CD8-positive, alpha-beta T cell (primary cell): ENCODE measurements at regions of chr2 and their contacts with region 1.

Region 1: GRCh38 chr2:69717861-69718273 is 24.1 kb upstream of the ANXA4 start:
- DNase-seq: no peak
- ATAC-seq: no peak
- H3K4me3 ChIP-seq: no peak overlapping the region
- H3K4me3 Mint-ChIP-seq: no peak overlapping the region
- H3K27ac ChIP-seq: no peak overlapping the region
- H3K27ac Mint-ChIP-seq: no peak overlapping the region
- H3K4me1 ChIP-seq: peaks cover 11% of the 10 kb centered on the region
- H3K4me1 Mint-ChIP-seq: peaks cover 18% of the 10 kb centered on the region
- H3K27me3 ChIP-seq: no peaks in the 10 kb centered on the region
- H3K27me3 Mint-ChIP-seq: no peaks in the 10 kb centered on the region
- CTCF ChIP-seq: no peak

Region 2: GRCh38 chr2:69483696-69484095 is 234.2 kb before region 1 on chr2:
- CTCF ChIA-PET with region 1: no interaction called
- POLR2A ChIA-PET with region 1: no interaction called
- intact Hi-C with region 1: no loop called
- DNase-seq: no peak
- ATAC-seq: no peak
- H3K4me3 ChIP-seq: no peak overlapping the region
- H3K4me3 Mint-ChIP-seq: no peak overlapping the region
- H3K27ac ChIP-seq: no peak overlapping the region
- H3K27ac Mint-ChIP-seq: peak overlapping the region; percentile 66
- H3K4me1 ChIP-seq: no peaks in the 10 kb centered on the region
- H3K4me1 Mint-ChIP-seq: peaks cover 11% of the 10 kb centered on the region
- H3K27me3 ChIP-seq: no peaks in the 10 kb centered on the region
- H3K27me3 Mint-ChIP-seq: no peaks in the 10 kb centered on the region
- CTCF ChIP-seq: no peak

Region 3: GRCh38 chr2:69559442-69560146 is 158.3 kb before region 1 on chr2:
- CTCF ChIA-PET with region 1: interaction called, 72 read pairs
- POLR2A ChIA-PET with region 1: no interaction called
- intact Hi-C with region 1: loop called (anchors 1 kb)
- DNase-seq: peak in 2 of 9 experiments; percentile 51 to 63
- ATAC-seq: peak; percentile 70
- H3K4me3 ChIP-seq: no peak overlapping the region
- H3K4me3 Mint-ChIP-seq: no peak overlapping the region
- H3K27ac ChIP-seq: no peak overlapping the region
- H3K27ac Mint-ChIP-seq: peak overlapping the region; percentile 83
- H3K4me1 ChIP-seq: peaks cover 81% of the 10 kb centered on the region
- H3K4me1 Mint-ChIP-seq: peaks cover 86% of the 10 kb centered on the region
- H3K27me3 ChIP-seq: no peaks in the 10 kb centered on the region
- H3K27me3 Mint-ChIP-seq: no peaks in the 10 kb centered on the region
- CTCF ChIP-seq: peak; percentile 68

Region 4: GRCh38 chr2:69625078-69625795 is 92.6 kb before region 1 on chr2:
- CTCF ChIA-PET with region 1: interaction called, 5 read pairs
- POLR2A ChIA-PET with region 1: no interaction called
- intact Hi-C with region 1: loop called in 1 of 2 experiments (anchors 5 kb)
- DNase-seq: peak in 1 of 9 experiments; percentile 40
- ATAC-seq: peak; percentile 19
- H3K4me3 ChIP-seq: no peak overlapping the region
- H3K4me3 Mint-ChIP-seq: no peak overlapping the region
- H3K27ac ChIP-seq: peak overlapping the region in 1 of 2 experiments; percentile 7
- H3K27ac Mint-ChIP-seq: no peak overlapping the region
- H3K4me1 ChIP-seq: peaks cover 81% of the 10 kb centered on the region
- H3K4me1 Mint-ChIP-seq: peaks cover 17% of the 10 kb centered on the region
- H3K27me3 ChIP-seq: no peaks in the 10 kb centered on the region
- H3K27me3 Mint-ChIP-seq: no peaks in the 10 kb centered on the region
- CTCF ChIP-seq: no peak

Region 5: GRCh38 chr2:69652221-69652651 is 65.6 kb before region 1 on chr2:
- CTCF ChIA-PET with region 1: interaction called, 54 read pairs
- POLR2A ChIA-PET with region 1: no interaction called
- intact Hi-C with region 1: loop called in 1 of 2 experiments (anchors 1 kb)
- DNase-seq: no peak
- ATAC-seq: no peak
- H3K4me3 ChIP-seq: no peak overlapping the region
- H3K4me3 Mint-ChIP-seq: no peak overlapping the region
- H3K27ac ChIP-seq: no peak overlapping the region
- H3K27ac Mint-ChIP-seq: no peak overlapping the region
- H3K4me1 ChIP-seq: peaks cover 46% of the 10 kb centered on the region
- H3K4me1 Mint-ChIP-seq: peaks cover 59% of the 10 kb centered on the region
- H3K27me3 ChIP-seq: no peaks in the 10 kb centered on the region
- H3K27me3 Mint-ChIP-seq: no peaks in the 10 kb centered on the region
- CTCF ChIP-seq: no peak

Region 6: DNA sequence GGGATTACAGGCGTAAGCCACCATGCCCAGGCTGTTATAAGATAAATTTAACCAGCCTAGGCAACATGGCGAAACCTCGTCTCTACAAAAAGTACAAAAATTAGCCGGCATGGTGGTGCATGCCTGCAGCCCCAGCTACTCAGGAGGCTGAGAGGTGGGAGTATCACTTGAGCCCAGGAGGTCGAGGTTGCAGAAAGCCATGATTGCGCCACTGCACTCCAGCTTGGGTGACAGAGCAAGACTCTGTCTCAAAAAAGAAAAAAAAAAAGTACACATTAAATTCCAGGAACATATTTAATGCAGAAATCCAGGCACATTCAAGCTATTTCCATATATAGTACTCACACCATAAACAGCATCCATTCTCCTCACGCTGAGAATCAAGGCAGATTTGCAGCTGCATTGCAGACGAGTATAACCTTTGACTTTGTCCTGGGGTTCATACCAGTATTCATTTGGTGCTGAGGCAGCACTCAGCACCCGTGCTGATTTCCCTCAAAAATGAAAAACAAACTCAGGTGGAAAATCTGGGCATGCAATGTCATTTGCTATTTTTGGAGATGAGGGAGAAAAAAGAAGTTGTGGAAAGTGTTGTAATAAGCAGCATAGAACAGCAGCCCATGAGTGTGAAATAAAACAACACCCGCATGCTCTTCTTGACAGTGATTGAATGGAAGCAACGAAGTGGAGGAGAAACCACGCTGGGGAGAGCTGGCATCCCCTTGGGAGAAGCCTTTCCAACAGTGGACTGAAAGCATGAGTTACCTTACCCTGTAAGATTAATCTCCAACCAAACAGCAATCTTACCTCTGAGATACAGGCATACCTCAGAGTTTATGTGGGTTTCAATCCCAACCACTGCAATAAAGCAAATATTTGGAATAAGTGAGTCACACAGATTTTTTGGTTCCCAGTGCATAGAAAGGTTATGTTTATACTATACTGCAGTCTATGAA is 22.7 kb before region 1 on chr2:
- CTCF ChIA-PET with region 1: interaction called, 28 read pairs
- POLR2A ChIA-PET with region 1: no interaction called
- intact Hi-C with region 1: no loop called
- DNase-seq: no peak
- ATAC-seq: no peak
- H3K4me3 ChIP-seq: no peak overlapping the region
- H3K4me3 Mint-ChIP-seq: peak overlapping the region; percentile 10
- H3K27ac ChIP-seq: peak overlapping the region in 1 of 2 experiments; percentile 4
- H3K27ac Mint-ChIP-seq: peak overlapping the region; percentile 98
- H3K4me1 ChIP-seq: peaks cover 83% of the 10 kb centered on the region
- H3K4me1 Mint-ChIP-seq: peaks cover 91% of the 10 kb centered on the region
- H3K27me3 ChIP-seq: no peaks in the 10 kb centered on the region
- H3K27me3 Mint-ChIP-seq: no peaks in the 10 kb centered on the region
- CTCF ChIP-seq: no peak

Region 7: DNA sequence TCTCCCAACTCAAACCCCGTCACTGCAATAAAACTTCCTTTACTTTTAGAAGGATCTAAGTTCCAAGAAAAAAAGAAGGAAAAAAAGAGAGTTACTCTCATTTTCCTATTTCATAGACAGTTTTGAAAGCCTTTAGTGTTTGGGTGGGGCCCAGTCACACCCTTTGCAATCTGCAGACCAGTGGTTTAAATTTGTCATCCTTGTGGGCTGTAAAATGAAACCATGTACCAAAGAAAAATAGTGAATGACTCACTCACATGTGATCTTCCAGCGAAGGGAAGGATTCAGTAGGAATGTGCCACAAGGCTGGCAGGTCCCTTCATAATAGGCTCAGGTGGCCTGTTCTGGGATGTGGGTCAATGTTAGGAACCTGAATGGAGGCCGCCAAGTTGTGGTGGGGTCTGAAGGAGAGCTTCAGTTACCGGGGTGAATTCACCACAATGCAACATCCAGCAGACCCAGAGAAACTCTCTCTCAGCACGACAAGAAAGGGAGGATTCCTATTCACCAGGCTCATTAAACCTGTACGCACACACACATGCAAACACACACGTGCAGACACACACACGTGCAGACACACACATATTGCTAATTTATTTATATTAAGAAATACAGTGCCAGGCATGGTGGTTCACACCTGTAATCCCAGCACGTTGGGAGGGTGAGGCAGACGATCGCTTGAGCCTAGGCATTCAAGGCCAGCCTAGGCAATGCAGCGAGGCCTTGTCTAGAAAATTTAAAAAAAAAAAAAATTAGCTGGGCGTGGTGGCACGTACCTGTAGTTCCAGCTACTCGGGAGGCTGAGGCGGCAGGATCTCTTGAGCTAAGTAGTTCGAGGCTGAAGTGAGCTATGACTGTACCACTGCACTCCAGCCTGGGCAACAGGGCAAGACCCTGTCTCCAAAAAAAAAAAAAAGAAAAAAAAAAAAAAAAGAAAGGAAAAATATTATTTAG is 52.6 kb after region 1 on chr2:
- CTCF ChIA-PET with region 1: no interaction called
- POLR2A ChIA-PET with region 1: no interaction called
- intact Hi-C with region 1: no loop called
- DNase-seq: peak in 5 of 9 experiments; percentile 1 to 63 (median 38)
- ATAC-seq: no peak
- H3K4me3 ChIP-seq: no peak overlapping the region
- H3K4me3 Mint-ChIP-seq: no peak overlapping the region
- H3K27ac ChIP-seq: peak overlapping the region in 1 of 2 experiments; percentile 5
- H3K27ac Mint-ChIP-seq: no peak overlapping the region
- H3K4me1 ChIP-seq: peaks cover 11% of the 10 kb centered on the region
- H3K4me1 Mint-ChIP-seq: peaks cover 35% of the 10 kb centered on the region
- H3K27me3 ChIP-seq: no peaks in the 10 kb centered on the region
- H3K27me3 Mint-ChIP-seq: no peaks in the 10 kb centered on the region
- CTCF ChIP-seq: no peak

Region 8: DNA sequence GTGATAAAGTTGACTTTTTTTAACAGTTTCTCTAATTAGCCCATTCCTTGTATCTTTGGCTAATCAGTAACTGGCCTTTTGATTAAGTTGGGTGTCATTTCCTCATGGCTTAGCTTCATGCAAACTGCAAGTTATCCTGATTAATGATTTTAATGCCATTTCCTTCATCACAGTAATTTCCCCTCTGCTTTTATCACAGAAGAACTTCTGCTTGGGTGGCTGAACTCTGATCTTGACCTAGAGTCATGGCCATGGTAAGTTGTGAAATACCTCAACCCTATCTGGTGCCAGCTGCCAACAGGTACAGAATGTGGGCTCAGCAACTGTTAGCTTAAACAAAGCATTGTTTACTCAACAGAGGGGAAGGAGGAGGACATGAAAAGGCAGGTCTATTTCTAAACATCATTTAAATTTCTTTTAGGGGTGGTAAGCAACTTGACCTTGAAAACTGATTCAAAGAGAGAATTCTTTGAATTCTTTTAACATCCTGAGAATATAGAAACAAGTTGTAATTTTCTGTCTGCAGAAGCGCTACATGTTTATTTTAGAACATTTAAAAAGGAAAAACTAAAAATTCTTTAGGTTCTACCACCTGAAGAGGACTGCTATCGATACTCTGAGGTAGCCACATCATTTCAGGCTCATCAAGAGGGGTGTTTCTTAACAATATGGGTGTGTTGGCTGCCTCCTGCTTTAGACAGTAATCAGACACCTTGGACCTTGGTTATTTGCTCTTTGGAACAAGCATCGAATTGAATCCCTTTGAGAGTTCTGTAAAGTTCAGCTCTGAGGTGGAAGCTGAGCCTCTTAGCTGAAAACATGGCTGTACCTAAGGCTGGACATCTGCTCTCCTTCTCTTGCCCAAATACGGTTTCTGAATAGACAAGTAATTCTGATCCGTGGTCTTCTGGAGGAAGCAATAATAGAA is 63.7 kb after region 1 on chr2:
- CTCF ChIA-PET with region 1: no interaction called
- POLR2A ChIA-PET with region 1: no interaction called
- intact Hi-C with region 1: no loop called
- DNase-seq: no peak
- ATAC-seq: no peak
- H3K4me3 ChIP-seq: no peak overlapping the region
- H3K4me3 Mint-ChIP-seq: no peak overlapping the region
- H3K27ac ChIP-seq: no peak overlapping the region
- H3K27ac Mint-ChIP-seq: no peak overlapping the region
- H3K4me1 ChIP-seq: no peaks in the 10 kb centered on the region
- H3K4me1 Mint-ChIP-seq: no peaks in the 10 kb centered on the region
- H3K27me3 ChIP-seq: no peaks in the 10 kb centered on the region
- H3K27me3 Mint-ChIP-seq: no peaks in the 10 kb centered on the region
- CTCF ChIP-seq: no peak

Region 9: DNA sequence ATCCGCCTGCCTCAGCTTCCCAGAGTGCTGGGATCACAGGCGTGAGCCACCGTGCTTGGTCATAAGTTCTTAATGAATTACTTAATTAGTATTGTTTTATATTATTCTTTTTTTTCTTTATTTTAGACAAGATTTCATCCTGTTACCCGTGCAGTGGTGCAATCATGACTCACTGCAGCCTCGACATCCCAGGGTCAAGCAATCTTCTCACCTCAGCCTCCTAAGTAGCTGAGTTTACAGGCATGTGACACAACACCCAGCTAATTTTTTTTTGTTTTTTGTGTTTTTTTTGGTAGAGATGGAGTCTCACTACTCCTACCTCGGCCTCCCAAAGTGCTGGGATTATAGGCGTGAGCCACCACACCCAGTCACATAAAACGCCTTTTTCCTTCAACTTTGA is 455.7 kb after region 1 on chr2:
- CTCF ChIA-PET with region 1: no interaction called
- POLR2A ChIA-PET with region 1: no interaction called
- intact Hi-C with region 1: no loop called
- DNase-seq: no peak
- ATAC-seq: no peak
- H3K4me3 ChIP-seq: no peak overlapping the region
- H3K4me3 Mint-ChIP-seq: no peak overlapping the region
- H3K27ac ChIP-seq: no peak overlapping the region
- H3K27ac Mint-ChIP-seq: no peak overlapping the region
- H3K4me1 ChIP-seq: no peaks in the 10 kb centered on the region
- H3K4me1 Mint-ChIP-seq: no peaks in the 10 kb centered on the region
- H3K27me3 ChIP-seq: no peaks in the 10 kb centered on the region
- H3K27me3 Mint-ChIP-seq: no peaks in the 10 kb centered on the region
- CTCF ChIP-seq: no peak